Transverse colon (tissue), 4 donors: ENCODE measurements at regions of chr19 and their contacts with region 1.

Region 1: DNA sequence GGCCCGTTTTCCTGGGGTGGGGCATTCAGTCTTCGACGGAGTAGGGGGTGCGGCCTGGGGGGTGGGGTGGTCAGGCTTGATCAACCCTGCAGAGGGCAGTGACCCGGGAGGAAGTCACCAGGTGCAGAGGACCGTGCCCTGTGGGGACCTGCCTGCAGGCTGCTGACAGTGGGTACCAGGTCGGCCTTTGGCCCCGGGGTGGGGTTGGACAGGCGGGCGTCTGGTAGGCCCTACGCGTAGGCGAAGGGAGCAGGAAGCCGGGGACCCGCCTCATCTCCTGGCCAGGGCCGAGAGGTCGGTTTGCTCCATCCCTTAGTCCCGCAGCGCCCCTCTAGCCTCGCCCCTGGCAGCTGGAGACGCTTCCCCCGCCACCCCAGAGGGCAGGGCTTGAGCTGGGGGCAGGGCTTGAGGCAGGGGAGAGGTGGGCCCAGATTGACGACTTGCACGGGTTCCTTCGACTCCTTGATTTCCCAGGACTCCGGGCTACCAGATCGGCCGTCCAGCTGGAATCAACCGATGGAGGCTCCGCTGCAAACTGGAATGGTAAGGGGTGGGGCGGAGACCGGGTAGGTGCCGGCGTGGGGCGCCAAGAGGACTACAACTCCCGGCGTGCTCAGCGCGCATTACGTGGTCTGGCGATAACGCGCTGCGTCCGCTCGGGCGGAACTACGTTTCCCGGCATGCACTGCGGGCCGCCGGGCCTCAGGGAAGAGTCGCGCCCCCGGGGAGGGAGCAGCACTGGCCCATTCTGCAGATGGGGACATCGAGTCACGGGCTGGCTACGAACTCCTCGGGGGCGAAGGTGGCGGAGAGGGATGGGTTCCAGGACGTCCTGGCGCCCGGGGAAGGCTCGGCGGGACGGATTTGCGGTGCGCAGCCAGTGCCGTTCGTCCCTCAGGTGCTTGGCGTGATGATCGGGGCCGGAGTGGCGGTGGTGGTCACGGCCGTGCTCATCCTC is at the start of gene PNPLA6:
- DNase-seq: peak; percentile 98
- H3K4me3 ChIP-seq: peak within 1 kb of the TSS; percentile 57 to 76 (median 66)
- H3K27ac ChIP-seq: peak within 1 kb of the TSS; percentile 86 to 99 (median 93)
- H3K4me1 ChIP-seq: peaks cover 4 to 21% (median 11%) of the 10 kb centered on the region in 4 donors
- H3K27me3 ChIP-seq: no peaks in the 10 kb centered on the region
- CTCF ChIP-seq: no peak
- EP300 ChIP-seq: no peak
- POLR2A ChIP-seq: peak; percentile 77
- total RNA-seq, gene PNPLA6: 115 to 435 (median 147) TPM

Region 2: DNA sequence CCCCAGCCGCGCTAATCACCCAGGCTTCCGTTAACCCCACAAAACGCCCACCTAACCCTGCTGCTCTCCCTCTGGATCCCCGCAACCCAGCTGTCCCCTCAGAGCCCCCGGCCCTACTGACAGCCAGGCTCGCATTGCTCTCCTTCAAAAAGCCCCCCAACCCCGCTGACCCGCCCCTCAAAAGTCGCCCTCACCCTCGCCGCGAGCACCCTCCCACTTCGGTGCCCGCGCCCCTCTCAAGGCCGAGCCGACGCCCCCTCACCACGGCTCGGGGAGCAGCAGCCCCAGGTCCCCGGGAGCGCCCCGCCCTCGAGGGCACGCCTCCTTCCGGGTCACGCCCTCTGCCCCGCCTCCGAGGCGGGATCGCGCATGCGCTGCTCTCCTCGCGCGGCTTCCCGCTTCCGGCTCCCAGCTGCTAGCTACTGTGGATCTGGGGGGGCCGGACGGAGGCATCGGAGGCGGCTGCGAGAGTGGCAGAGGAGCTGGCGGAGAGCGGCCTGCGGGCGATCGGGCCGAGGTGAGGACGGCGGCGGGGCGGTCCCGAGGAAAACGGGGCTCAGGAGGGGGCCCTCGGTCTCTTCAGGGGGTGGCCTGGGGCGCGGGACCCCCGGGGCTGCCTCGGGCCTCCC is 140.5 kb before region 1 on chr19:
- in situ Hi-C with region 1: no loop called
- intact Hi-C with region 1: loop called (anchors 10 kb)
- DNase-seq: peak; percentile 95
- H3K4me3 ChIP-seq: peak overlapping the region; percentile 87 to 99 (median 92)
- H3K27ac ChIP-seq: peak overlapping the region; percentile 80 to 92 (median 91)
- H3K4me1 ChIP-seq: peaks cover 14 to 61% (median 49%) of the 10 kb centered on the region in 4 donors
- H3K27me3 ChIP-seq: no peaks in the 10 kb centered on the region
- CTCF ChIP-seq: peak in 1 of 5 experiments; percentile 16
- EP300 ChIP-seq: no peak
- POLR2A ChIP-seq: peak; percentile 91

Region 3: GRCh38 chr19:7488736-7489353 is 46.5 kb before region 1 on chr19 and contains the start of gene PEX11G:
- in situ Hi-C with region 1: no loop called
- intact Hi-C with region 1: loop called (anchors 1 kb)
- DNase-seq: peak; percentile 96
- H3K4me3 ChIP-seq: peak within 1 kb of the TSS; percentile 42 to 66 (median 63)
- H3K27ac ChIP-seq: peak within 1 kb of the TSS; percentile 87 to 90 (median 88)
- H3K4me1 ChIP-seq: peaks cover 0 to 22% (median 10%) of the 10 kb centered on the region in 4 donors
- H3K27me3 ChIP-seq: no peaks in the 10 kb centered on the region
- CTCF ChIP-seq: no peak
- EP300 ChIP-seq: no peak
- POLR2A ChIP-seq: peak; percentile 68
- total RNA-seq, gene PEX11G: 2.2 to 14.5 (median 8.9) TPM

Region 4: DNA sequence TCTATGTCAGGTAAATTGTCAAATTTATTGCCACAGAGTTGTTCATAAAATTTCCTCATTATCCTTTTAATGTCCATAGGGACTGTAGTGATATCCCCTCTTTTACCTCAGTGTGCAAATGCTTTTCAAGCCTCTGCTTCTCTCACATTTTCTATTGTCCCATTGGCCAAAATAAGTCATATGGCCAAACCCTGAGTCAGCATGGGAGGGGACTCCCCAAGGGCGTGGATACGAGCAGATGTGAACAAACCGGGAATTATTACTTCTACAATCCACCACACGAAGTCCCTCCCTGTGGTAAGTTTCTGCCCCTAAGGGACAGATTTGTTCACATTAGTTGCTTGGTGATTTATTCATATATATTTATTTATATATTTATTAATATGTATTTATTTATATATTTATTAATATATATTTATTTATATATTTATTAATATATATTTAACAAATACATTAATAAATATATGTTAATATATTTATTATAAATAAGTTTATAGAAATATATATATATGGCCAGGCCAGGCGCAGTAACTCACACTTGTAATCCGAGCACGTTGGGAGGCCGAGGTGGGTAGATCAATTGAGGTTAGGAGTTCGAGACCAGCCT is 40.2 kb after region 1 on chr19:
- in situ Hi-C with region 1: no loop called
- intact Hi-C with region 1: no loop called
- DNase-seq: no peak
- H3K4me3 ChIP-seq: no peak overlapping the region
- H3K27ac ChIP-seq: no peak overlapping the region
- H3K4me1 ChIP-seq: no peaks in the 10 kb centered on the region
- H3K27me3 ChIP-seq: no peaks in the 10 kb centered on the region
- CTCF ChIP-seq: no peak
- EP300 ChIP-seq: no peak
- POLR2A ChIP-seq: no peak